HepG2 (cell line): ENCODE measurements at regions of chr4 and their contacts with region 1.

Region 1: DNA sequence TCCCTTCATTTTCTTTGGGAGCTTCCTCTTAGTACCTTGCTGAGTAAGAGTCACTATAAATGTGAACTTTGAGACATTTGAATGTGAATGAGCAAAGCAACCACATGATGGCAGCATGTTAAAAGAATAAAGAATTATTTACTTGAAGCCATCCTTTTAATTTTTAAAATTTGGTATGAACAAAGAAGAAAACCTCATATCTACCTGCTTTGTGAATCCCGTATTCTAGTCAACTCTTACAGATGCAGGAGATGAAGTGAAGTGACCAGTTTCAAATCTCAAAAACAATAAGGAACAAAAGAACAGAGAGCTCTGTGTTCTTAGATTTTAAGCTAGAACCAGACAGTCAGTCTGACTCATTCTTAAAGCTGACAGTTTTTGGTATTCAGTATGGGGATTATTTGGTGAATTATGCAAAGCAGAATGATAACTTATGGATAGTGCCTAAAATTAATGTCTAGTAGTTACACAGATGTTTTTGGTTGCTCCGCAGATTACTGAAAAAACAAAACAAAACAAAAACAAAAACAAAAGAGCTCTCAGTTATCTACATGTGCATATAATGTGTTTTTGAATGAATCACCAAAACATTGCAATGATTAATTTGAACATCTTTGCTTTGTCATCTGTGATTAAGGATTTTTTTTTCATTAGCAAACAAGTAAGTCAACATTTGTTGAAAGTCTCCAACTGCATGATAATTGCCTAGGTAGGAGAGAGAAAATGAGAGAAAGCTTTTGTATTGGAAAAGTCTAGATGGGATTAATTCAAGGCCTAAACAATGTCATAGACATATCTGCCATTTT is 48.2 kb upstream of the H2AZ1 start:
- DNase-seq: peak; percentile 9
- ATAC-seq: peak; percentile 30; the same call in 1 of the 3 replicates
- H3K4me3 ChIP-seq: no peak overlapping the region
- H3K27ac ChIP-seq: no peak overlapping the region
- H3K4me1 ChIP-seq: no peaks in the 10 kb centered on the region
- H3K27me3 ChIP-seq: no peaks in the 10 kb centered on the region
- CTCF ChIP-seq: peak; percentile 38
- EP300 ChIP-seq: no peak
- POLR2A ChIP-seq: no peak
- RAD21 ChIP-seq: no peak

Region 2: DNA sequence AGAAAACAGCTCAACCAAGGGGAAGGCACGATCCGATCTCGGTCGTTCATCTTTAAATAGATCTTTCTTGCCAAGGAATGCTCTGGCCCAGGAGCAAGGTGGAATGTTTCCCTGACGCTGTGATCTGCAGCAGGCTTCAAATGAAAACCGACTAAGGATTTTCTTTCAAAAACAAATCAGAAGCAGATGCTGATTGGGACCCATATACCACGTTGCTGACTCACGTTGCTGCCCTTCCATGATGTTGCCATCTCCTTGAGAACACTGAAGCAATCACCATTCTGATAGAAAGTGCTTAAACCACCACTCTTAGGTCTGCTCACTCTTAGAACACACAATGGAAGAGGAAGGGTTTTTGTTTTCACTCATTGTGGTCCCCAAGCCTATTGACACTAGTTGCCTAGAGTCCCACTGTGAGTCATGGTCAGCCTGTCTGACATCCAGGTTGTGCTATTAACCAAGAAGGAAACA is 130.1 kb before region 1 on chr4:
- CTCF ChIA-PET with region 1: no interaction called
- POLR2A ChIA-PET with region 1: no interaction called
- in situ Hi-C with region 1: no loop called
- intact Hi-C with region 1: no loop called
- DNase-seq: no peak
- ATAC-seq: no peak
- H3K4me3 ChIP-seq: no peak overlapping the region
- H3K27ac ChIP-seq: no peak overlapping the region
- H3K4me1 ChIP-seq: no peaks in the 10 kb centered on the region
- H3K27me3 ChIP-seq: no peaks in the 10 kb centered on the region; a peak in 1 of 5 replicates
- CTCF ChIP-seq: no peak
- EP300 ChIP-seq: no peak
- POLR2A ChIP-seq: no peak
- RAD21 ChIP-seq: no peak

Region 3: GRCh38 chr4:100095729-100096595 is 97.7 kb after region 1 on chr4:
- CTCF ChIA-PET with region 1: interaction called, 4 read pairs
- POLR2A ChIA-PET with region 1: no interaction called
- in situ Hi-C with region 1: no loop called
- intact Hi-C with region 1: loop called (anchors 5 kb)
- DNase-seq: peak; percentile 54
- ATAC-seq: peak; percentile 99
- H3K4me3 ChIP-seq: no peak overlapping the region; a peak in 1 of 6 replicates
- H3K27ac ChIP-seq: no peak overlapping the region
- H3K4me1 ChIP-seq: peaks cover 21% of the 10 kb centered on the region
- H3K27me3 ChIP-seq: no peaks in the 10 kb centered on the region; a peak in 2 of 5 replicates
- CTCF ChIP-seq: peak; percentile 80
- EP300 ChIP-seq: no peak; a peak in 1 of 4 replicates
- POLR2A ChIP-seq: no peak
- RAD21 ChIP-seq: no peak